ENCODE measurements at regions of chr12 and their contacts with region 1.

Region 1: DNA sequence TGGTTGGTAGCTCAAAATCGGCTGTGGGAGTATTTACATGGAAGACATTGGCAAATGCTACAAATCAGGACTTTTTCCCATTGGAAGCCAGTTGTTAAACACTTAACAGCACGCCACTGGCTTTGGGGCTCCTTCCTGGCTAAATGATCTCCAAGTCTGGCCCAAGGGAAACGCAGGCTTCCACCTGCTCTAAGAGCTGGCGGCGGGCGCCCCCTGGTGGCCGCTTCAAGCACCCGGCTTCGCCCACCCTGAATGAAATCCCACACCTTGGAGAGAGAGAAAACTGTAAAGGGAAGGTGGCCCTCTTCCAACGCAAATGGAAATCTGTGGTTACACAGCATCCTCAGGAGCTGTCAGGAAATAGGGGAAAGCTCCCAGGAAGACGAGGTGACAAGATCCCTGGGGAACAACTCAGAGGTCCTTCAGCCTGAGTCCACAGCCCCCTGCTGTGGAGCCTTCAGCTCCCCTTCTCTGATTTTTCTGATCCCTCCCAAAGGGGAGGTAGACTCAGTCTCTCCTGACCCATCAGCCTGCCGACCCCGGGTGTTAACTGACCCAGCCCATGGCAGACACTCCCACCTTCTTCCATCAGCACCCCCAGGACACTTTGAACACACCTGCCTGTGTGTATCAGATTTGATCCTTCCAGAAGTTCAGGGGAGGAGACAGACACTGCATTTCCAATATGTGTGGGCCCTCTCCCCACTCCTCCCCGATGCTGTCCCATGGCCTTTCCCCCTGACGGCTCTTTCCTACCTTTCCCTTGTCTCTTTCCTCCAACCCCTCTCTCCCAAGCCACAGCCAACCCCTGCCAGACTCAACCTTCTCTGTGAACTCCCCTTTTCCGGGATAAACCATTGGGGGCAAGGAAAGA is 15.4 kb downstream of the SELPLG start:
- DNase-seq: peak; percentile 69
- H3K4me3 Mint-ChIP-seq: no peak overlapping the region
- H3K27ac Mint-ChIP-seq: peak overlapping the region; percentile 57
- H3K4me1 Mint-ChIP-seq: peaks cover 57% of the 10 kb centered on the region
- H3K27me3 Mint-ChIP-seq: peaks cover 2% of the 10 kb centered on the region

Region 2: DNA sequence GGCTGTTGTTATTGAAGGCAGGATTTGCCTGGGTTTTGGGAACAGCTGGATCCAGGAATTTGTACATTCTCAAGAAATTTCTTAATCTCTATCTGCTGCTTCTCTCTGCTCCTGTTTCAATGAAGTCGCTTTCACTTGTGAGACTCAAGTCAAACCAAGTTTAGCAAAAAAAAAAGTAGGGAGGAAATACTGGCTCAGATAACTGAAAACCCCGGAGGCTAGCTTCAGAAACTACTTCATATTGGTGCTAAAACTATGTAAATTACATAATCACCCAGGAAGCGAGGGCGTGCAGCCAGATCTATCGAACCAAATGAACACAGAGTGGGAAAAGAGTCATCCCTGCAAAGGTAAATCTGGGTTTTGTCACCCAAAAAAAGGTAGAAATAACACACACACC is 171.6 kb before region 1 on chr12:
- intact Hi-C with region 1: no loop called
- DNase-seq: no peak
- H3K4me3 Mint-ChIP-seq: no peak overlapping the region
- H3K27ac Mint-ChIP-seq: no peak overlapping the region
- H3K4me1 Mint-ChIP-seq: no peaks in the 10 kb centered on the region
- H3K27me3 Mint-ChIP-seq: peaks cover 4% of the 10 kb centered on the region

Region 3: DNA sequence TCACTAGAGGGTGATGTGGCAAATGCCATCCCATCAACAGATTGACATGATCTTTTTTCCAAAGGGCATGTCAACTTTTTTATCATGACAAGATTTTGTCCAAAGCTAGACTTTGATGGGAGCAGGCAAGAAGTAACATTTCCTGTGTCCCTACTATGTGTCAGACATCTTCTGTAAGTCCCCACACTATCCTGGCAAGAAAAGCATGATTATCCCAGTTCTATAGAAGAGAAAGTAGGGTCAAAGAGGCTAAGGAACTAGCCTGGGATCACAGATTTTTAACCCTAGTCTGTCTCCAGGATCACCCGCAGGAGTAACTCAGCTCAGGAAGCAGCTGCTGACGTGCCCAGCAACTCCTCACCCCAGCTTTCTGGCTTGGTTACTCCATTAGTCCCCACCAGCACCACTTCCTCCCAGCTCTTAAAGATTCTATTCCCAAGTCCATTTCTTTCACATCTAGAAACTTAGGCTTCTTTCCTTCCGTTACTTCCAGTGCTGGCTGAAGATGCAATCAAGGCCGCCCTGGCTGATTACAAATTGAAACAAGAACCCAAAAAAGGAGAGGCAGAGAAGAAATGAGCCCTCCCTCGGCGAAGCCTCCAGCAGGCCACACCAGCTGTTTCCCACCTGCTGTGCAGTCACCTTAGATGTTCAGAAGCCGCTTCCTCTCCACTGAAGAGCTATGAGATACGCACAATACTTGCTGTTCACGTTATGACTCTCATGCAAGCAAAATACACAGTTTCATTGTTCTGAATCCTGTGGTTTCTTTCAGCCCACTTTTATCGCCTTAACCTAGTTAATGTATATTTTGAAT is 49.8 kb before region 1 on chr12:
- intact Hi-C with region 1: loop called (anchors 1 kb)
- DNase-seq: peak; percentile 76
- H3K4me3 Mint-ChIP-seq: peak overlapping the region; percentile 77
- H3K27ac Mint-ChIP-seq: peak overlapping the region; percentile 88
- H3K4me1 Mint-ChIP-seq: peaks cover 75% of the 10 kb centered on the region
- H3K27me3 Mint-ChIP-seq: no peaks in the 10 kb centered on the region

Region 4: GRCh38 chr12:108589028-108589839 is 29.1 kb before region 1 on chr12:
- intact Hi-C with region 1: no loop called
- DNase-seq: no peak
- H3K4me3 Mint-ChIP-seq: no peak overlapping the region
- H3K27ac Mint-ChIP-seq: no peak overlapping the region
- H3K4me1 Mint-ChIP-seq: no peaks in the 10 kb centered on the region
- H3K27me3 Mint-ChIP-seq: peaks cover 6% of the 10 kb centered on the region